Endothelial cell of umbilical vein (primary cell): ENCODE measurements at regions of chr4 and their contacts with region 1.

Region 1: GRCh38 chr4:26410385-26411293 is 79.6 kb downstream of the CCKAR start:
- DNase-seq: peak; percentile 67
- H3K4me3 ChIP-seq: no peak overlapping the region
- H3K27ac ChIP-seq: no peak overlapping the region
- H3K4me1 ChIP-seq: no peaks in the 10 kb centered on the region
- H3K27me3 ChIP-seq: no peaks in the 10 kb centered on the region
- CTCF ChIP-seq: peak; percentile 31 to 42
- POLR2A ChIP-seq: no peak

Region 2: DNA sequence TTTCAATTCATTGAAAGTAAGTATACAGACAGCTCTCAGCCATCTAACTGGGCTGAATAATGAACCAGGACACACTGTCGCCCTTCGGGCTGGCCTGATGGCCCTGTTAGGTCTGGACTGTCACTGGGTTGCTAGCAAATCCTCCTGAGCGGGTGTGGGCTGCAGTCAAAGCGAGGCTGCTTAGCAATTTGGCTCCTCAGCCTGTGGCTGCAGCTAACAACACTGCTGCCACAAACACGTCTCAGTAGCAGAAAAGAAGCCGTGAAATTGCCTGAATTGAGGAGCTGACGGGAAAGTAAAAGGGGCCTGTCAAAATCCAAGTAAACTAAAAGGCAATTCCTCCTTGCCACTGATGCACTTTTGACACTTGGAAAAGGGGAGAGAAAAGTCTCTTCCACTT is 423.8 kb before region 1 on chr4:
- CTCF ChIA-PET with region 1: interaction called, 40 read pairs
- POLR2A ChIA-PET with region 1: no interaction called
- dilution Hi-C with region 1: no loop called
- intact Hi-C with region 1: loop called (anchors 1 kb)
- DNase-seq: no peak
- H3K4me3 ChIP-seq: no peak overlapping the region
- H3K27ac ChIP-seq: no peak overlapping the region
- H3K4me1 ChIP-seq: no peaks in the 10 kb centered on the region
- H3K27me3 ChIP-seq: peaks cover 0 to 2% of the 10 kb centered on the region in 2 experiments
- CTCF ChIP-seq: no peak
- POLR2A ChIP-seq: no peak

Region 3: GRCh38 chr4:26061248-26061986 is 349.2 kb before region 1 on chr4:
- CTCF ChIA-PET with region 1: interaction called, 6 read pairs
- POLR2A ChIA-PET with region 1: no interaction called
- dilution Hi-C with region 1: no loop called
- intact Hi-C with region 1: loop called (anchors 1 kb)
- DNase-seq: no peak
- H3K4me3 ChIP-seq: no peak overlapping the region
- H3K27ac ChIP-seq: no peak overlapping the region
- H3K4me1 ChIP-seq: no peaks in the 10 kb centered on the region
- H3K27me3 ChIP-seq: no peaks in the 10 kb centered on the region
- CTCF ChIP-seq: peak; percentile 33 to 45
- POLR2A ChIP-seq: no peak

Region 4: DNA sequence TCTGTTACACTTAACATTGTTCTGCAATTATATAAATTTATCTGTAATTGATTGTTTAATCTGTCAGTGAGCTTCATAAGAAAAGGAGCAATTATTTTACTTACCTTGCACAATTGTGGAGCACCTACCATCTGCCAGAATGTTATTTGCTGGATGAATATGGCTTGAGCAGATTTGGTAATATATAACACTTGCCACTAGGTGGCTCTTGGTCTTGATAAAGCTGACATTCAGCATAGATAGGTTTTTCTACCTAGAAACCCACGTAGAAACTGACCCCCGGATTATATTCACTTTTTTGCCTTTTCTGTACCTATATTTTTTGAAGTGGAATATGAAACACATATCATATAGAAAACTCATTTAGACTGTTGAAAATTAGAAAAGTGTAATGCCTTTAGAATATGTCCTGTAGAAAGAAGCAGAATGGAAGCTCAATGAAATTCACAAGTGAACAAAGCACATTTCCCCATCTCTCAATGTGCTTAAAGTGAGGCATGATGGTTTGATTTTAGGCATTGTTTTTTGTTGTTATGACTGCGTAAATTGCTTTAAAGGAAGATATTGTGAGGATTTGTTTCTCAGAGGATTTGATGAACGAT is 80.4 kb before region 1 on chr4:
- CTCF ChIA-PET with region 1: interaction called, 259 read pairs
- POLR2A ChIA-PET with region 1: no interaction called
- dilution Hi-C with region 1: no loop called
- intact Hi-C with region 1: loop called (anchors 1 kb)
- DNase-seq: peak; percentile 74
- H3K4me3 ChIP-seq: no peak overlapping the region
- H3K27ac ChIP-seq: no peak overlapping the region
- H3K4me1 ChIP-seq: no peaks in the 10 kb centered on the region
- H3K27me3 ChIP-seq: no peaks in the 10 kb centered on the region
- CTCF ChIP-seq: peak; percentile 21 to 56
- POLR2A ChIP-seq: no peak

Region 5: DNA sequence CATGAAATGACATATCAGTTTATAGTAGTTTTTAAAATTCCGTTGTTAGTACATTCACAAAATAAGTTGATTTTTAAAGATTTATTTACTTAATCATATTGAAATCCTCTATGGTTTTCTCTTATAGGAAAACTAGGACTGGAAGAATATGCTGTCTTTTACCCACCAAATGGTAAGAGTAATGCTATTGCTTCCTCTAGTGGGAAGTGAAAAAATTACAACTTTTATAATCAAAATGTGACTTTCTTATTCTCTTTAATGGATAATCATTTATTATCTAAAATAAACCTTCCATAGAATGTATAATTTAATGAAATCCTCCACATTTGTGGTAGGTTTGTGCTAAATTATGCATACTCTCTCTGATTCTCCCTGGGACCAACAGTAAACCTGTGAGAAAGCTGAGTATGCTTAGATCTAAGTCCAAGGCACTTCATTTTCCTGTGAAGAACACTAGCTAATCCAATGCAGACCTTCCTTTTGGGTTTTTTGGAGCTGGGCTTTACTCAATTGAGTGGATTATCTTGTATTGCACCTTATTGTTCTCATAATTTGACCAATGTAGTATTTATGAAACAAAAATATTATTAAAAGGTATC is 309.4 kb after region 1 on chr4:
- CTCF ChIA-PET with region 1: interaction called, 4 read pairs
- POLR2A ChIA-PET with region 1: no interaction called
- dilution Hi-C with region 1: no loop called
- intact Hi-C with region 1: loop called (anchors 2 kb)
- DNase-seq: peak; percentile 45
- H3K4me3 ChIP-seq: no peak overlapping the region
- H3K27ac ChIP-seq: no peak overlapping the region
- H3K4me1 ChIP-seq: no peaks in the 10 kb centered on the region
- H3K27me3 ChIP-seq: no peaks in the 10 kb centered on the region
- CTCF ChIP-seq: peak in 1 of 2 donors; percentile 34
- POLR2A ChIP-seq: no peak

Region 6: GRCh38 chr4:27289704-27290103 is 879.1 kb after region 1 on chr4:
- CTCF ChIA-PET with region 1: no interaction called
- POLR2A ChIA-PET with region 1: no interaction called
- dilution Hi-C with region 1: no loop called
- intact Hi-C with region 1: no loop called
- DNase-seq: no peak
- H3K4me3 ChIP-seq: no peak overlapping the region
- H3K27ac ChIP-seq: no peak overlapping the region
- H3K4me1 ChIP-seq: no peaks in the 10 kb centered on the region
- H3K27me3 ChIP-seq: no peaks in the 10 kb centered on the region
- CTCF ChIP-seq: no peak
- POLR2A ChIP-seq: no peak